ENCODE measurements at regions of chr12 and their contacts with region 1.

Region 1: DNA sequence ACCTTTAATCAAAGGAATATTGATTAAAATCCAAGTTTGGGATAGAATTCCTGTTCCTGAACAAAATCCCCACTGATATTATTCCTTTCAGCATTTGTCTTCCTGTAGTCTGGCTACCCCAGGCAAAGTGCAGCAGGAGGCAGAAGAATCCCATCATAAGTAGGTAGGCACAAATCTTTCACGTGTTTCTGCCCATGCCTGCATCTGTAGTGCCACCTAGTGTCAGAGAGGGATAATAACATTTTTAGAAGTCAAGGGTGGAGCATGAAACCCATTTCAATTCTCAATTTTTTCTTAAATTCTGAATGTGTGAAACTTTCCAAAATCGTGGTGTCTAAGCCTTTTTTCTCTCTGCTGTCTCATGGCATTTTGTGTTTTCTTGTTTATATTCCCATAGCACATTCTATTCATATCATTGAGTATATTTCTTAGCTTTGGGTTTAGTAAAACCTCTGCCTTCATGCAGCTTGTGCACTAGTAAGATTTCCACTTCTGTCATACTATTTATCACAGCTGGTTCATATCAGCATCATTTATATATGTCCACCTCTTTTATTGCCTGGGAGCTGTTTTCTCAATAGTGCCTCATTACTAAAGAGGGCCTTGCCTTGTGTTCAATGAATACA is 47.8 kb upstream of the RERG start:
- DNase-seq: no peak
- ATAC-seq: peak; percentile 82
- H3K4me3 ChIP-seq: no peak overlapping the region
- H3K27ac ChIP-seq: no peak overlapping the region
- H3K4me1 ChIP-seq: peaks cover 0 to 3% of the 10 kb centered on the region in 2 donors
- H3K27me3 ChIP-seq: no peaks in the 10 kb centered on the region

Region 2: DNA sequence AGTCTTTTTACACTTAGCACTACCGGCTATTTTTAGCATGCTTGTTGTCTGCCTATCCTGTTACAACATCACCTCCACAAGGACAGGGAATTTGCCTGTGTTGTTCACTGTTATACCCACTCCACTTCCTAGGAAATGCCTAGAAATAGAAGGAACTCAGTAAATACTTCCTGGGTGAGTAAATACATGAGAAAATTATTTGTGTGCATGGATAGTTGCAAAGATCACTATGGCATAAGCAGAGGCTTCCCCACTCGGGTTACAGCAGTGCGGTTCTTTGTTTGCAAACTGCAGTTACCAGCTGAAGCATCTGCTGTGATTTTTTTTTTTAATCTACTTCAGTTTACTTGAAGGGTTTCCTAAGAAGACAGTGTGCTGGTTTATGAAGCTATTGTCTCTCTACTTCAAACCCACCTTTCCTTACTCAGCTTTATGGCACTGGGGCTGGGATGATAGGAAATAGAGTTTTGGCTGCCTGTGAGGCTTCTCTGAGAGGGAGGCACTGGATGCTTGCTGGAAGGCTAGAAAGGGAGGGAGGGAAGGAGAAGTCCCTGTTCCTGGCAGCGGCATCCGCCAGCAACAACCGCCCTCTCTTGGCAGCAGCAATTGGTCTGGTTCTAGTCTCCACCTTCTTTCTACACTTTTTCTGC is 267.2 kb before region 1 on chr12:
- intact Hi-C with region 1: loop called in 1 of 2 experiments (anchors 10 kb)
- DNase-seq: peak; percentile 79 to 80
- ATAC-seq: peak; percentile 87
- H3K4me3 ChIP-seq: peak overlapping the region in 1 of 2 donors; percentile 6
- H3K27ac ChIP-seq: peak overlapping the region in 1 of 2 donors; percentile 33
- H3K4me1 ChIP-seq: peaks cover 2% of the 10 kb centered on the region in 2 donors
- H3K27me3 ChIP-seq: no peaks in the 10 kb centered on the region

Region 3: DNA sequence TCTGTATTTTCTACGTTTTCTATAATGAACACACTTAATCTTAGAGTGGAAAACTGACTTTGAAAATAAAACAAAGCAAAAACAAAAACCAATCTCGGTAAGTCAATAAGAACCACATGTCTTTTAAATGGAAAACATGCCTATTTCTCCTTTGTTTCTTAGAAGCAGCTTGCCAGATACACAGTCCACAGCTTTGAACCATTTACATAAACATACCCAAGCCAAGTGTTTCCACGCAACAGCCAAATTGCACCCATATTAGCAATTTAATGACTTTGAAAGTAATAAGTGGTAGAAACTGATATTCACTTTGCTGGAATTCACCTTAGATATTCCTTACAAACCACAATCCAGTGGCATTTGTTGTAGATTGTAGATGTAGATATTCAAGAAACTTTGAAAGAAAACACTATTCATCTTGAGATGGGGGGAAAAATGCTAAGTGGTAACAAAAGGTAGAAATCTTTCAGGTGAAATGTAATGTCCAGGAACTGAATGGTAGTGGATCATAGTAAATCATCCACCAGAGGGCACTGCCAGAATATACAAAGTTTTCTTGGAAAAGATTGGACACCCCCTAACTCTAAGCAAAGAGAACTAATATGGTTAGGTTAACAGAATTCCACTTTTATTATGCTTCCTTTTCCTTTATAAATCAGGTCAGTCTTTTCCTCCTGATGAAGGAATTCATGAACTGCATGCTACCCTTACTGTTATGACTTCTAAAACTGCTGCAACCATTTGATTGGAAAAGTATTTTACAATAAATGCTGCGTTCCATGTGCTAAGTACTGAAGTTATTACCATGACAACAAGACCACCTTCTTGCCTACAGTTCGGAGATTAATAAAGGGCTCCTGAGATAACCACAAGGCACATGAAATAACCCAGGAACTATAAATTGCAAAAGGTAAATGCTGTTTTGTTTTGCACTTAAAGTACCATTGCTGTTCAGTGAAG is 117.6 kb before region 1 on chr12:
- intact Hi-C with region 1: loop called (anchors 2 to 5 kb)
- DNase-seq: no peak
- ATAC-seq: peak; percentile 83
- H3K4me3 ChIP-seq: no peak overlapping the region
- H3K27ac ChIP-seq: peak overlapping the region in 1 of 2 donors; percentile 96
- H3K4me1 ChIP-seq: peaks cover 7 to 9% of the 10 kb centered on the region in 2 donors
- H3K27me3 ChIP-seq: no peaks in the 10 kb centered on the region

Region 4: GRCh38 chr12:15227004-15227679 is 41.9 kb before region 1 on chr12:
- intact Hi-C with region 1: loop called (anchors 5 kb)
- DNase-seq: peak; percentile 71 to 80
- ATAC-seq: peak; percentile 70
- H3K4me3 ChIP-seq: no peak overlapping the region
- H3K27ac ChIP-seq: no peak overlapping the region
- H3K4me1 ChIP-seq: peaks cover 0 to 4% of the 10 kb centered on the region in 2 donors
- H3K27me3 ChIP-seq: no peaks in the 10 kb centered on the region

Region 5: GRCh38 chr12:15306605-15307004 is 37.6 kb after region 1 on chr12:
- intact Hi-C with region 1: no loop called
- DNase-seq: peak in 1 of 2 donors; percentile 57
- ATAC-seq: no peak
- H3K4me3 ChIP-seq: no peak overlapping the region
- H3K27ac ChIP-seq: no peak overlapping the region
- H3K4me1 ChIP-seq: no peaks in the 10 kb centered on the region
- H3K27me3 ChIP-seq: no peaks in the 10 kb centered on the region

Measured in aorta (tissue), 5 donors.